A549 (cell line): ENCODE measurements at regions of chr19 and their contacts with region 1.

Region 1: GRCh38 chr19:1455336-1456120 is 5.6 kb downstream of the APC2 start:
- DNase-seq: peak; percentile 56 to 88
- ATAC-seq: peak; percentile 42 to 66; a peak in 5 of 6 replicates
- H3K4me3 ChIP-seq: no peak overlapping the region
- H3K27ac ChIP-seq: no peak overlapping the region
- H3K4me1 ChIP-seq: peaks cover 10% of the 10 kb centered on the region; the same call in 2 of the 3 replicates
- CTCF ChIP-seq: no peak
- EP300 ChIP-seq: no peak
- POLR2A ChIP-seq: no peak
- RAD21 ChIP-seq: no peak

Region 2: GRCh38 chr19:1445185-1445931 is 10.2 kb before region 1 on chr19:
- CTCF ChIA-PET with region 1: interaction called, 34 read pairs
- POLR2A ChIA-PET with region 1: interaction called, 3 read pairs
- DNase-seq: peak; percentile 70 to 84
- ATAC-seq: peak; percentile 58 to 84
- H3K4me3 ChIP-seq: peak overlapping the region; percentile 63
- H3K27ac ChIP-seq: peak overlapping the region; percentile 79 to 96
- H3K4me1 ChIP-seq: peaks cover 48% of the 10 kb centered on the region
- CTCF ChIP-seq: peak; percentile 69
- EP300 ChIP-seq: no peak
- POLR2A ChIP-seq: peak; percentile 7; the same call in 1 of the 2 replicates
- RAD21 ChIP-seq: peak; percentile 26 to 37

Region 3: DNA sequence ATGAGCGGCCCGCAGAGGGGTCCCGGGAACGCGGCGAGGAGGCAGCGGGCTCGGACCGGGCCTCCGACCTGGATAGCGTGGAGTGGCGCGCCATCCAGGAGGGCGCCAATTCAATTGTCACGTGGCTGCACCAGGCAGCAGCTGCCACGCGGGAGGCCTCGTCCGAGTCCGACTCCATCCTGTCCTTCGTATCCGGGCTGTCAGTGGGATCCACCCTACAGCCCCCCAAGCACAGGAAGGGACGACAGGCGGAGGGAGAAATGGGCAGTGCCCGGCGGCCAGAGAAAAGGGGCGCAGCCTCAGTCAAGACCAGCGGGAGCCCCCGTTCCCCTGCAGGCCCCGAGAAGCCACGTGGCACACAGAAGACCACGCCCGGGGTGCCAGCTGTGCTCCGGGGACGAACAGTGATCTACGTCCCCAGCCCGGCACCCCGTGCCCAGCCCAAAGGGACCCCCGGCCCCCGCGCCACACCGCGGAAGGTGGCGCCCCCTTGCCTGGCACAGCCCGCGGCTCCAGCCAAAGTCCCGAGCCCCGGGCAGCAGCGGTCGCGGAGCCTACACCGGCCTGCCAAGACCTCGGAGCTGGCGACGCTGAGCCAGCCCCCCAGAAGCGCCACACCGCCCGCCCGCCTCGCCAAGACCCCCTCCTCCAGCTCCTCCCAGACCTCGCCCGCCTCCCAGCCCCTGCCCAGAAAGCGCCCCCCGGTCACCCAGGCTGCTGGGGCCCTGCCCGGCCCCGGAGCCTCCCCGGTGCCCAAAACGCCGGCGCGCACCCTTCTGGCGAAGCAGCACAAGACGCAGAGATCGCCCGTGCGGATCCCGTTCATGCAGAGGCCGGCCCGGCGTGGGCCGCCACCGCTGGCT is 13.0 kb after region 1 on chr19:
- CTCF ChIA-PET with region 1: interaction called, 11 read pairs
- POLR2A ChIA-PET with region 1: interaction called, 3 read pairs
- DNase-seq: peak in 1 of 2 experiments; percentile 60
- ATAC-seq: peak; percentile 63 to 65
- H3K4me3 ChIP-seq: peak overlapping the region; percentile 45
- H3K27ac ChIP-seq: peak overlapping the region; percentile 61 to 87; a peak in 5 of 6 replicates
- H3K4me1 ChIP-seq: peaks cover 7% of the 10 kb centered on the region
- CTCF ChIP-seq: no peak; the same call in 2 of the 3 replicates
- EP300 ChIP-seq: no peak
- POLR2A ChIP-seq: no peak
- RAD21 ChIP-seq: no peak